ENCODE measurements at regions of chr18 and their contacts with region 1.

Region 1: DNA sequence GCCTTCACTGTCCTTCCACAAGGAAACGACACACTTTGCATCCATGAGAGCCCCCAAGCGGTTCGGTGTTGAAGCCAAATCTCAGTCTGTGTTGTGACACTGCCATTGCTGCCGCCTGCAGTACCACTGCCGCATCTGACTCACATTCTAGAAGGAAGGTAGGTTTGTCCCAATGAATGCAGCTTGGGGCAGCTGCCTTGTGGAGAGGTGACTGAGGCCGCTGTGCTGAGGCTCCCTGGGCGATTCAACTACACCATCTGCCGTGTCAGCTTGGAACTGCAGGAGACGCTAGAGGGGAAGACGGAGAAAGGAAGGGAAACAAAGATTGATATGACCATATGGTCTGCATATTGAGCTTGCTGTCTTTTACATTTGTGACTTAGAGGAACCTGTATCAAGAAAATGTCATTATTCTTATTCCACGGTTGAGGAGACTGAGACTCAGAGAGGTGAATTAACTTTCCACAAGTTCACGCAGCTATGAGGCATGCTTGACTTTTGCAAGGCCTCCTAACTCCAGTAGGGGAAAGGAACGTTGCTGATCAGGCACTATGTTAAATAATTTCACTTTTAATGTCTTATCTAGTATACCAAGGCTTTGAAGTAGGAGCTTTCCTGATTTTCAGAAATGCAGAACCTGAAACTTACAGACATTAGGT is 43.5 kb upstream of the LMAN1 start:
- DNase-seq: peak; percentile 62 to 83
- ATAC-seq: peak; percentile 98 to 100 (median 100)
- H3K4me3 ChIP-seq: no peak overlapping the region
- H3K27ac ChIP-seq: no peak overlapping the region
- H3K4me1 ChIP-seq: peaks cover 3% of the 10 kb centered on the region
- H3K27me3 ChIP-seq: no peaks in the 10 kb centered on the region
- CTCF ChIP-seq: peak; percentile 98

Region 2: GRCh38 chr18:59139371-59140298 is 262.9 kb before region 1 on chr18 and contains the start of gene SEC11C:
- intact Hi-C with region 1: no loop called
- DNase-seq: peak; percentile 96 to 98
- ATAC-seq: peak; percentile 95 to 98 (median 96)
- H3K4me3 ChIP-seq: peak within 1 kb of the TSS; percentile 92
- H3K27ac ChIP-seq: peak within 1 kb of the TSS; percentile 92
- H3K4me1 ChIP-seq: peaks cover 14% of the 10 kb centered on the region
- H3K27me3 ChIP-seq: peaks cover 0 to 1% (median 0%) of the 10 kb centered on the region in 3 donors
- CTCF ChIP-seq: no peak
- total RNA-seq, gene SEC11C: 11.3 to 19.5 (median 15.9) TPM

Region 3: DNA sequence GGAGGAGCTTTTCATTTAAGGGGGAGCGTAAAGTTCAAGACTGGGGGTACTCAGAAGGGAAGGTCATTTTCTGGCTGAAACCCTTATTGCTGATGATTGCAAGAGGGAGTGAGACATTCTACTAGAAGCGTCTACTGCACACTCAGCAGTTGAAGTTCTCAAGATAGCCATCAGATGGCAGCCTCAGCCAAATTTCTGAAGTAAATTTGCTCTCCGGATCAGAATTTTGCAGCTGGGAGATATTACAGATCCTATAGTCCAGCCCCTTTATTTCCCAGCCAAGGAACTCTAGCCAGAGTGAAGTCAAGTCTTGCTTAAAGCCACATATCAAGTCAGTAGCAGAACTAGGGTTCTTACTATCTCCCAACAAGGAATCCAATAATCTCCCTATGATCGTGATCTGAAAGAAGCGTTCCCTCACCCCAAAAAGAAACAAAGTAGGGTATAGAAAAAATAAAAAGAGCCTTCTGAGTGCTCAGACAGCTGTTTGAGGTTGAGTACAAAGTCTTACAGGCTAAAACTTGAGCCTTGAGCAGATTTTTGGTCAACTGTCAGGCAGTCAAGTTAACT is 153.3 kb before region 1 on chr18:
- intact Hi-C with region 1: loop called (anchors 2 to 5 kb)
- DNase-seq: no peak
- ATAC-seq: peak in 1 of 4 donors; percentile 54
- H3K4me3 ChIP-seq: no peak overlapping the region
- H3K27ac ChIP-seq: no peak overlapping the region
- H3K4me1 ChIP-seq: no peaks in the 10 kb centered on the region
- H3K27me3 ChIP-seq: peaks cover 0 to 24% (median 10%) of the 10 kb centered on the region in 3 donors
- CTCF ChIP-seq: peak; percentile 71

Region 4: GRCh38 chr18:59308248-59308937 is 94.2 kb before region 1 on chr18:
- intact Hi-C with region 1: loop called (anchors 2 kb)
- DNase-seq: peak; percentile 77 to 84
- ATAC-seq: peak; percentile 95 to 100 (median 97)
- H3K4me3 ChIP-seq: peak overlapping the region; percentile 52
- H3K27ac ChIP-seq: no peak overlapping the region
- H3K4me1 ChIP-seq: peaks cover 3% of the 10 kb centered on the region
- H3K27me3 ChIP-seq: peaks cover 2 to 10% (median 6%) of the 10 kb centered on the region in 3 donors
- CTCF ChIP-seq: peak; percentile 83